ENCODE measurements at regions of chr5 and their contacts with region 1.

Region 1: GRCh38 chr5:35926389-35927051 is 11.9 kb downstream of the CAPSL start:
- DNase-seq: peak in 13 of 14 experiments; percentile 30 to 85 (median 51)
- ATAC-seq: peak; percentile 44
- H3K4me3 ChIP-seq: no peak overlapping the region
- H3K4me3 Mint-ChIP-seq: peak overlapping the region; percentile 80
- H3K27ac ChIP-seq: no peak overlapping the region
- H3K27ac Mint-ChIP-seq: no peak overlapping the region
- H3K4me1 ChIP-seq: peaks cover 22% of the 10 kb centered on the region
- H3K4me1 Mint-ChIP-seq: peaks cover 43% of the 10 kb centered on the region
- H3K27me3 ChIP-seq: no peaks in the 10 kb centered on the region
- H3K27me3 Mint-ChIP-seq: no peaks in the 10 kb centered on the region
- CTCF ChIP-seq: peak; percentile 96

Region 2: GRCh38 chr5:34957857-34958690 is 968.4 kb before region 1 on chr5:
- CTCF ChIA-PET with region 1: no interaction called
- POLR2A ChIA-PET with region 1: no interaction called
- intact Hi-C with region 1: loop called in 1 of 2 experiments (anchors 5 kb)
- DNase-seq: peak in 3 of 14 experiments; percentile 2 to 21 (median 20)
- ATAC-seq: peak; percentile 51
- H3K4me3 ChIP-seq: no peak overlapping the region
- H3K4me3 Mint-ChIP-seq: no peak overlapping the region
- H3K27ac ChIP-seq: no peak overlapping the region
- H3K27ac Mint-ChIP-seq: peak overlapping the region; percentile 15
- H3K4me1 ChIP-seq: no peaks in the 10 kb centered on the region
- H3K4me1 Mint-ChIP-seq: peaks cover 10% of the 10 kb centered on the region
- H3K27me3 ChIP-seq: no peaks in the 10 kb centered on the region
- H3K27me3 Mint-ChIP-seq: no peaks in the 10 kb centered on the region
- CTCF ChIP-seq: peak; percentile 44

Region 3: GRCh38 chr5:35202319-35203111 is 724.0 kb before region 1 on chr5:
- CTCF ChIA-PET with region 1: no interaction called
- POLR2A ChIA-PET with region 1: no interaction called
- intact Hi-C with region 1: loop called in 1 of 2 experiments (anchors 1 kb)
- DNase-seq: peak in 10 of 14 experiments; percentile 2 to 50 (median 16)
- ATAC-seq: no peak
- H3K4me3 ChIP-seq: no peak overlapping the region
- H3K4me3 Mint-ChIP-seq: no peak overlapping the region
- H3K27ac ChIP-seq: no peak overlapping the region
- H3K27ac Mint-ChIP-seq: no peak overlapping the region
- H3K4me1 ChIP-seq: no peaks in the 10 kb centered on the region
- H3K4me1 Mint-ChIP-seq: no peaks in the 10 kb centered on the region
- H3K27me3 ChIP-seq: peaks cover 3 to 10% of the 10 kb centered on the region in 2 experiments
- H3K27me3 Mint-ChIP-seq: peaks cover 46% of the 10 kb centered on the region
- CTCF ChIP-seq: peak; percentile 45

Region 4: GRCh38 chr5:35651002-35651756 is 275.3 kb before region 1 on chr5:
- CTCF ChIA-PET with region 1: interaction called, 143 read pairs
- POLR2A ChIA-PET with region 1: interaction called, 31 read pairs
- intact Hi-C with region 1: loop called (anchors 1 kb)
- DNase-seq: peak; percentile 37 to 84 (median 58)
- ATAC-seq: peak; percentile 99
- H3K4me3 ChIP-seq: no peak overlapping the region
- H3K4me3 Mint-ChIP-seq: no peak overlapping the region
- H3K27ac ChIP-seq: no peak overlapping the region
- H3K27ac Mint-ChIP-seq: peak overlapping the region; percentile 23
- H3K4me1 ChIP-seq: peaks cover 5% of the 10 kb centered on the region
- H3K4me1 Mint-ChIP-seq: peaks cover 16% of the 10 kb centered on the region
- H3K27me3 ChIP-seq: no peaks in the 10 kb centered on the region
- H3K27me3 Mint-ChIP-seq: no peaks in the 10 kb centered on the region
- CTCF ChIP-seq: peak; percentile 84

Region 5: DNA sequence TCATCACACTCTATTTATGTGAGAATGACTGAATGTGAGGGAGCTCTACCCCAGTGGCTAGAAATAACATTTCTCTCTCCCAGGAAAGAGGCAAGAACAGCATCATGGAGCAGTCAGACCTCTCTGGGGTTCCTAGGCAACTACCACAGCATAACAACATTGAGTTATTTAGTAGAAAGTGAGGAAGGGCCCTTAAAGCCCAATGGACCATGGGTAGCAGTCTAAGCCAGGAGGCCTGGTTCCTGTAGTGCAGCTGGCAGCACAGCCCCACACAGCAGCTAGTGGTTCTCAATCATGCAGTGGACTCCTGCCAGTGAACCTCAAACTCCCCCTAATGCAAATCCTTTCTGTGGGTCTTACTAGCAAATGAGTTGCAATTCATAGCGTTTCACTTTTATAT is 253.5 kb before region 1 on chr5:
- CTCF ChIA-PET with region 1: interaction called, 27 read pairs
- POLR2A ChIA-PET with region 1: interaction called, 4 read pairs
- intact Hi-C with region 1: loop called in 1 of 2 experiments (anchors 5 kb)
- DNase-seq: peak in 12 of 14 experiments; percentile 3 to 70 (median 23)
- ATAC-seq: peak; percentile 74
- H3K4me3 ChIP-seq: no peak overlapping the region
- H3K4me3 Mint-ChIP-seq: peak overlapping the region; percentile 63
- H3K27ac ChIP-seq: peak overlapping the region in 1 of 2 donors; percentile 25
- H3K27ac Mint-ChIP-seq: peak overlapping the region; percentile 93
- H3K4me1 ChIP-seq: peaks cover 10% of the 10 kb centered on the region
- H3K4me1 Mint-ChIP-seq: peaks cover 78% of the 10 kb centered on the region
- H3K27me3 ChIP-seq: no peaks in the 10 kb centered on the region
- H3K27me3 Mint-ChIP-seq: no peaks in the 10 kb centered on the region
- CTCF ChIP-seq: no peak

Region 6: GRCh38 chr5:35971186-35971877 is 44.8 kb after region 1 on chr5:
- CTCF ChIA-PET with region 1: no interaction called
- POLR2A ChIA-PET with region 1: no interaction called
- intact Hi-C with region 1: no loop called
- DNase-seq: no peak
- ATAC-seq: no peak
- H3K4me3 ChIP-seq: no peak overlapping the region
- H3K4me3 Mint-ChIP-seq: no peak overlapping the region
- H3K27ac ChIP-seq: no peak overlapping the region
- H3K27ac Mint-ChIP-seq: no peak overlapping the region
- H3K4me1 ChIP-seq: no peaks in the 10 kb centered on the region
- H3K4me1 Mint-ChIP-seq: no peaks in the 10 kb centered on the region
- H3K27me3 ChIP-seq: no peaks in the 10 kb centered on the region
- H3K27me3 Mint-ChIP-seq: peaks cover 31% of the 10 kb centered on the region
- CTCF ChIP-seq: no peak